ENCODE measurements at regions of chr5 and their contacts with region 1.

Region 1: GRCh38 chr5:158979749-158980521 is 119.8 kb downstream of the EBF1 start:
- DNase-seq: peak; percentile 81 to 85
- ATAC-seq: peak; percentile 78
- H3K4me3 ChIP-seq: peak overlapping the region in 1 of 2 donors; percentile 41
- H3K27ac ChIP-seq: peak overlapping the region in 1 of 2 donors; percentile 86
- H3K4me1 ChIP-seq: peaks cover 10 to 18% of the 10 kb centered on the region in 2 donors
- H3K27me3 ChIP-seq: no peaks in the 10 kb centered on the region

Region 2: GRCh38 chr5:158770506-158770905 is 209.4 kb before region 1 on chr5:
- intact Hi-C with region 1: loop called in 1 of 2 experiments (anchors 5 kb)
- DNase-seq: no peak
- ATAC-seq: no peak
- H3K4me3 ChIP-seq: no peak overlapping the region
- H3K27ac ChIP-seq: peak overlapping the region in 1 of 2 donors; percentile 8
- H3K4me1 ChIP-seq: peaks cover 9 to 19% of the 10 kb centered on the region in 2 donors
- H3K27me3 ChIP-seq: no peaks in the 10 kb centered on the region

Region 3: GRCh38 chr5:158802941-158803341 is 177.0 kb before region 1 on chr5:
- intact Hi-C with region 1: loop called in 1 of 2 experiments (anchors 10 kb)
- DNase-seq: no peak
- ATAC-seq: peak; percentile 69
- H3K4me3 ChIP-seq: peak overlapping the region in 1 of 2 donors; percentile 41
- H3K27ac ChIP-seq: peak overlapping the region; percentile 82 to 93
- H3K4me1 ChIP-seq: peaks cover 2 to 8% of the 10 kb centered on the region in 2 donors
- H3K27me3 ChIP-seq: no peaks in the 10 kb centered on the region

Region 4: DNA sequence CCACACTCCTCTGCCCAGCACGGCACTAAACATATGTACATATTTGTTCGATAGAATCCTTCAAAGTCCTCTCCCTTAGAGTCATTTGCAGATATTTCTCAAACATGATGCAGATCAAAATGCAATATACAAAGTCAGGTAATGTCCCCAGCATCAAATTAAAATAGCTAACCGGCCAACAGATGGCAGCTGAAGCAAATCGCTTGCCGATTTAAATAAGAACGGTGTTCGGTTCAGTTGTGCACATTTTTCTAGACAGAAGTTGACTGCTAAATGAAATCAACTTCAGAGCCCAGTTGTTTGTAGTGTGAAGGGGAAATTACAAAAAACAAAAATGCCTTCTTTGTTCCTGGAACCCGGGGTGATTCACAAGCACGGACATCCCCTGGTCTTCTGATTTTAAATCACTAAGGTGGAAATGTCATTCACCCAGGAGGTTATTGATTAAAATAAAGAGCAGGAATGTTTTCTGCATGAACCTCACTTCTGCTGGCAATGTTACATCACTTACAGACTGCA is 99.4 kb before region 1 on chr5:
- intact Hi-C with region 1: loop called in 1 of 2 experiments (anchors 5 kb)
- DNase-seq: no peak
- ATAC-seq: no peak
- H3K4me3 ChIP-seq: no peak overlapping the region
- H3K27ac ChIP-seq: no peak overlapping the region
- H3K4me1 ChIP-seq: peaks cover 12 to 38% of the 10 kb centered on the region in 2 donors
- H3K27me3 ChIP-seq: no peaks in the 10 kb centered on the region

Region 5: GRCh38 chr5:159100025-159100781 is 120.3 kb after region 1 on chr5:
- intact Hi-C with region 1: loop called in 1 of 2 experiments (anchors 5 kb)
- DNase-seq: peak; percentile 95 to 97
- ATAC-seq: peak; percentile 94
- H3K4me3 ChIP-seq: peak overlapping the region; percentile 55 to 94
- H3K27ac ChIP-seq: peak overlapping the region; percentile 17 to 80
- H3K4me1 ChIP-seq: no peaks in the 10 kb centered on the region
- H3K27me3 ChIP-seq: no peaks in the 10 kb centered on the region

Measured in aorta (tissue), 5 donors.